ENCODE measurements at regions of chr3 and their contacts with region 1.

Region 1: GRCh38 chr3:111521891-111522290 is 20.1 kb upstream of the CD96 start:
- DNase-seq: no peak
- ATAC-seq: no peak
- H3K4me3 ChIP-seq: no peak overlapping the region
- H3K27ac ChIP-seq: no peak overlapping the region
- H3K4me1 ChIP-seq: no peaks in the 10 kb centered on the region
- CTCF ChIP-seq: no peak
- EP300 ChIP-seq: no peak
- POLR2A ChIP-seq: no peak
- RAD21 ChIP-seq: no peak

Region 2: GRCh38 chr3:111534701-111535100 is 12.8 kb after region 1 on chr3:
- CTCF ChIA-PET with region 1: interaction called, 16 read pairs
- POLR2A ChIA-PET with region 1: no interaction called
- DNase-seq: no peak
- ATAC-seq: no peak
- H3K4me3 ChIP-seq: no peak overlapping the region
- H3K27ac ChIP-seq: no peak overlapping the region
- H3K4me1 ChIP-seq: peaks cover 14% of the 10 kb centered on the region
- CTCF ChIP-seq: no peak
- EP300 ChIP-seq: no peak
- POLR2A ChIP-seq: no peak
- RAD21 ChIP-seq: no peak